Heart left ventricle (tissue), 16 donors: ENCODE measurements at regions of chr14 and their contacts with region 1.

Region 1: GRCh38 chr14:44912041-44912869 is 49.5 kb downstream of the KLHL28 start:
- DNase-seq: peak in 2 of 5 donors; percentile 29 to 64
- ATAC-seq: peak in 3 of 4 donors; percentile 50 to 70 (median 59)
- H3K4me3 ChIP-seq: peak overlapping the region; percentile 47 to 73 (median 62)
- H3K27ac ChIP-seq: peak overlapping the region in 3 of 12 donors; percentile 19 to 37 (median 31)
- H3K4me1 ChIP-seq: peaks cover 0 to 20% (median 3%) of the 10 kb centered on the region in 12 donors
- H3K27me3 ChIP-seq: peaks cover 0 to 14% (median 0%) of the 10 kb centered on the region in 9 donors
- CTCF ChIP-seq: no peak
- POLR2A ChIP-seq: no peak

Region 2: GRCh38 chr14:44873536-44873935 is 38.7 kb before region 1 on chr14:
- intact Hi-C with region 1: no loop called
- DNase-seq: no peak
- ATAC-seq: no peak
- H3K4me3 ChIP-seq: no peak overlapping the region
- H3K27ac ChIP-seq: no peak overlapping the region
- H3K4me1 ChIP-seq: no peaks in the 10 kb centered on the region
- H3K27me3 ChIP-seq: no peaks in the 10 kb centered on the region
- CTCF ChIP-seq: no peak
- POLR2A ChIP-seq: no peak

Region 3: DNA sequence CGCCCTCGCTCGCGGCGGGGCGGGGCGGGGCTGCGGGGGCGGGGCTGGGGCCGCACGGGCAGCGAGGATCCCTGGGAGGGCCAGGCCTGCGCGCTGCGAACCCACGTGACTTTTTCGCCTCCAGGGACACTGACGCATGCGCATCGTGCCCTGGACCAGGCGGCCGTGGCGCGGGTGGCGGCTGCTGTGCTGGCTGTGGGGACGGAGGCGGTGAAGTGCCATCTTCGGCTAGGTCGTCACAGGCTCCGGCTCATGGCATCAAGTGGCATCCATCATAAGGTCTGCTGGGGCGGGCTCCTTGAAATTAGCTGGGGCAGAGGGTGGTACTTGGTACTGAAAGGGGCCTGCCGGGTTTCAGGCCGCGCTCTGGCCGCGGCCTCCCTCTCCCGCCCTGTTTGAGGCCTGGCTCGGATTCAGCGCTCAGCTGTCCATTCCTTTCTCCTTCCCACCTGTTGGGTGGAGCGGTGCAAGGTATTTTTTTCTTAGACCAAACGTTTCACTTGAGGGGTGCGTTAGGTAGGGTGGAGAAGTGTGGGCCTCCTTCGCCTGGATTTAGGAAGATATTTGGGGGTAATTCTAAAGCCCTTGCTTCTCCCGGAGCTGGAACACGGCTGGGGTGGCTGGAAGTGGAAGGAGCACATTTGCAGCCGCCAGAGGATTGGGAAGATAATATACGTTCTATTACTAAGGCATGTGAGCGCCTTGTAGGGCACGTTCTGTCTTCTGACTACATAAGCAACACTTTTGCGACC is 171.9 kb after region 1 on chr14 and contains the start of gene PRPF39:
- intact Hi-C with region 1: loop called in 1 of 10 experiments (anchors 10 kb)
- DNase-seq: peak; percentile 95 to 97 (median 96)
- ATAC-seq: peak; percentile 99 to 100 (median 99)
- H3K4me3 ChIP-seq: peak within 1 kb of the TSS; percentile 59 to 85 (median 76)
- H3K27ac ChIP-seq: peak within 1 kb of the TSS; percentile 35 to 91 (median 80)
- H3K4me1 ChIP-seq: peaks cover 0 to 51% (median 31%) of the 10 kb centered on the region in 12 donors
- H3K27me3 ChIP-seq: no peaks in the 10 kb centered on the region
- CTCF ChIP-seq: no peak
- POLR2A ChIP-seq: peak in 1 of 2 donors; percentile 84
- total RNA-seq, gene PRPF39: 5.9 to 17.0 (median 13.3) TPM

Region 4: GRCh38 chr14:45253068-45253753 is 341.0 kb after region 1 on chr14 and contains the start of gene MIS18BP1:
- intact Hi-C with region 1: loop called in 3 of 10 experiments (anchors 5 kb)
- DNase-seq: peak; percentile 96 to 97 (median 97)
- ATAC-seq: peak; percentile 96 to 98 (median 97)
- H3K4me3 ChIP-seq: peak within 1 kb of the TSS; percentile 55 to 88 (median 78)
- H3K27ac ChIP-seq: peak within 1 kb of the TSS; percentile 87 to 98 (median 93)
- H3K4me1 ChIP-seq: peaks cover 0 to 53% (median 20%) of the 10 kb centered on the region in 12 donors
- H3K27me3 ChIP-seq: no peaks in the 10 kb centered on the region
- CTCF ChIP-seq: peak; percentile 63 to 97 (median 83)
- POLR2A ChIP-seq: peak in 1 of 2 donors; percentile 34
- total RNA-seq, gene MIS18BP1: 4.1 to 22.0 (median 7.1) TPM

Region 5: GRCh38 chr14:45267071-45267470 is 354.8 kb after region 1 on chr14:
- intact Hi-C with region 1: loop called (anchors 2 to 10 kb)
- DNase-seq: peak in 1 of 5 donors; percentile 26
- ATAC-seq: peak; percentile 91 to 96 (median 93)
- H3K4me3 ChIP-seq: no peak overlapping the region
- H3K27ac ChIP-seq: peak overlapping the region in 9 of 12 donors; percentile 5 to 81 (median 66)
- H3K4me1 ChIP-seq: peaks cover 0 to 16% (median 2%) of the 10 kb centered on the region in 12 donors
- H3K27me3 ChIP-seq: no peaks in the 10 kb centered on the region
- CTCF ChIP-seq: no peak
- POLR2A ChIP-seq: no peak

Region 6: GRCh38 chr14:45526715-45527549 is 614.7 kb after region 1 on chr14:
- intact Hi-C with region 1: loop called in 1 of 10 experiments (anchors 10 kb)
- DNase-seq: no peak
- ATAC-seq: peak in 3 of 4 donors; percentile 54 to 71 (median 57)
- H3K4me3 ChIP-seq: no peak overlapping the region
- H3K27ac ChIP-seq: no peak overlapping the region
- H3K4me1 ChIP-seq: no peaks in the 10 kb centered on the region
- H3K27me3 ChIP-seq: no peaks in the 10 kb centered on the region
- CTCF ChIP-seq: peak; percentile 24 to 56 (median 47)
- POLR2A ChIP-seq: no peak